Activated B cell treated with CpG ODN at 0.5 μM for 24 hours (primary cell): ENCODE measurements at regions of chr12 and their contacts with region 1.

Region 1: DNA sequence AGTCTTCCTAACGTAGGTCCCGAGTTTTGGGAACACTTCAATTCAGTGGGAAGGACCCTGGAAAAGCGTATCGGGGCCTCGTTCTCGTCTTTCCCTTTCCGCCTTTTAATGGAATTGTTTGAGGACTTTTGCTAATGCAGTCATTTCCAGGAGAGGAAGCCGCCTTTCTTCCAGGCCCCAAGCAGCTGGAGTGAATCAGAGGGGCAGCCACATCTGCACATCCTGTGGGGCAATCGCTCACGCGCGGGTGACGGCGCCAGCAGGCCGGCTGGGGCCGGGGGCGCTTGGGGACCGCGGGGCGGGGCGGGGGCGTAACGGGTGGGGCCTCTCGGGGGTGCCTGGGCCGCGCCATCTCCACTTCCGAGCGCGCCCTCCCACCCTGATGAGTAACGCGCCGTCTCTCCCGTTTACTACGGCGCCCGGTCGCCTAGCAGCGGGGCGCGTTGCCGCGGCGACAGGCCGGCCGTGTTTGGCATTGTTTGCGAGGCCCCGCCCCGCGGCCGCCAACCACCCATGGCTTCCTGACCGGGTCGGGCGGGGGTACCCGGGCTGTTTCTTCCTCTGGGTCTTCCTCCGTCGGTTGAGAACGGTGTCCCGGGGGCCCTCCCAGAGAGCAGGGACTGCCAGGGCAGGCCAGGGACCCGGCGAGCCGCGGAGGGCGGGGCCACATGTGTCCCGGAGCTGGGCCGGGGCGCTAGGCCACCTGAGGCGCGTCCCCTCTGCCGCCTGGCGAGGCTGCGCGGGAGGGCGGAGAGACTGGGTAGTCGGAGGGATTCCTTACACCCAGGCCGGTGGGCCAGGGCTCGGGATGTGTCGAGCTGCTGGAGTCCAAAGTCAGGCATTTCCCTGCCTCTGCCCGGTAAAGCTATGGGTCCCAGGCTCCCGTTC is 2.3 kb downstream of the GSG1 start:
- DNase-seq: peak; percentile 94
- ATAC-seq: peak; percentile 79
- H3K4me3 Mint-ChIP-seq: peak overlapping the region; percentile 83
- H3K27ac Mint-ChIP-seq: peak overlapping the region; percentile 96
- H3K4me1 Mint-ChIP-seq: peaks cover 63% of the 10 kb centered on the region
- H3K27me3 Mint-ChIP-seq: no peaks in the 10 kb centered on the region
- CTCF ChIP-seq: no peak

Region 2: GRCh38 chr12:12611512-12612306 is 489.4 kb before region 1 on chr12 and contains the start of gene CREBL2:
- CTCF ChIA-PET with region 1: no interaction called
- POLR2A ChIA-PET with region 1: no interaction called
- intact Hi-C with region 1: loop called (anchors 5 kb)
- DNase-seq: peak; percentile 75
- ATAC-seq: peak; percentile 91
- H3K4me3 Mint-ChIP-seq: peak within 1 kb of the TSS; percentile 94
- H3K27ac Mint-ChIP-seq: peak within 1 kb of the TSS; percentile 97
- H3K4me1 Mint-ChIP-seq: peaks cover 32% of the 10 kb centered on the region
- H3K27me3 Mint-ChIP-seq: no peaks in the 10 kb centered on the region
- CTCF ChIP-seq: no peak
- total RNA-seq, gene CREBL2: 10.1 and 10.8 TPM in 2 replicates

Region 3: GRCh38 chr12:12654691-12655460 is 446.2 kb before region 1 on chr12:
- CTCF ChIA-PET with region 1: no interaction called
- POLR2A ChIA-PET with region 1: no interaction called
- intact Hi-C with region 1: no loop called
- DNase-seq: no peak
- ATAC-seq: no peak
- H3K4me3 Mint-ChIP-seq: no peak overlapping the region
- H3K27ac Mint-ChIP-seq: no peak overlapping the region
- H3K4me1 Mint-ChIP-seq: peaks cover 7% of the 10 kb centered on the region
- H3K27me3 Mint-ChIP-seq: no peaks in the 10 kb centered on the region
- CTCF ChIP-seq: no peak

Region 4: DNA sequence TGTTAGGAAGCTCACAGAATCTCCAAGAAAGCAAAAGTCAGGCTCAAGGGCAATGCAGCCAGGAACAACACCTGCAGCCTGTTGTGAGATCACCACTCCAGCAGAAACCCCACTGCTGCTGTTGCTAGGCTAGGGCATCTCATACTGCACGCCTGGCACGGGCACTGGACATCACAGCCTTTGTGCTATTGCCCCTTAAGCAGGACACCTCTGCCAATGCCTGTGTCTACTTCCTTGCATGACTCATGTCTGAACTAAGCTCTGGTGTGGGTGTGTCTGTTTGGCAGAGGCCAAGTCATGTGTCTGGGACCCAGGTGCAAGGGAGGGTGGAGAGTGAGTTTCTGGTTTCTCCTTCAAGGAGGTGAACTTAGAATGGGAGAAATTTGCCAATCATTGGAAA is 297.9 kb before region 1 on chr12:
- CTCF ChIA-PET with region 1: no interaction called
- POLR2A ChIA-PET with region 1: no interaction called
- intact Hi-C with region 1: loop called (anchors 1 kb)
- DNase-seq: no peak
- ATAC-seq: peak; percentile 70
- H3K4me3 Mint-ChIP-seq: peak overlapping the region; percentile 12
- H3K27ac Mint-ChIP-seq: peak overlapping the region; percentile 6
- H3K4me1 Mint-ChIP-seq: peaks cover 65% of the 10 kb centered on the region
- H3K27me3 Mint-ChIP-seq: no peaks in the 10 kb centered on the region
- CTCF ChIP-seq: no peak

Region 5: DNA sequence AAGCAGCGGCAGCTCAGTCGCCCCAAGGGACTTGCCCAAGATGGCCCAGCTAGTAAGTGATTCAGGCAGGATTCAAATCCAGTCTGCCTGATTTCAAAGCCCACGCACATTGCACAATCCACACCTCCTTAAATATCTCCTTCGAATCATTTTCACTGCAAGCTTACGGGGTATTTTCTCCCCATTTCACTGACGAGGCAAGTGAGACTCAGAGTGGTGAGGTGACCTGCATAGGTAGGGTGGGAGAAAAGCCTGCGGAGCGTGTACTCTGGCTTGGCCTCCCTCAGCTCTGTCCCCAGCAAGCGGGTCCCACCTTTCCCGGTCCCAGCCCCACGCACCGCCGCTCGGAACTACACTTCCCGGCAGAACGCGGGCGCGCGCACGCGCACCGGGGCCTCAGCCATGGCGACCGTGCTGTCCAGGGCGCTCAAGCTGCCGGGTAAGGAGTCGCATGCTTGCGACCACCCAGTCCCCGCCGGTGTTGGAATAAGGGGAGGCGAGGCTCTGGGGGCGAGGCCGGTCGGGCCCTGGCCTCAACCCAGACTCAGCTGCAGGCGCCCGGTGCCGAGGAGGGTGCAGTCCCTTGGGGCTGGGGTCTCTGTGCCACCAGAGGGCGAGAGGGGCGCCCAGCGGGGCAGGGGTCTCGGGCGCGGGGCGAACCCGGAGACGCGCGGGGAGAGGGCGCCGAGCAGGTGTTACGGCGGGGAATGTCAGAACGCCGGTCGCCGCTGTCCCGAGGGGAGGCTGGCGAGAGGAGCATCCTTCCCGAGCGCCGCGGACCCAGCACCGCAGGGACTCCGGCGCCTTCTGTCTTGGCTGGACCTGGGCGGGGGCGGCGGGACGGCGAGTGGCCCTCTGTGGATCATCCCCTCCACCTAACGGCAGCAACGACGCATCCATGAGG is 56.9 kb before region 1 on chr12 and contains the start of gene FAM234B:
- CTCF ChIA-PET with region 1: no interaction called
- POLR2A ChIA-PET with region 1: interaction called, 13 read pairs
- intact Hi-C with region 1: loop called (anchors 1 kb)
- DNase-seq: peak; percentile 73
- ATAC-seq: peak; percentile 96
- H3K4me3 Mint-ChIP-seq: peak within 1 kb of the TSS; percentile 89
- H3K27ac Mint-ChIP-seq: peak within 1 kb of the TSS; percentile 80
- H3K4me1 Mint-ChIP-seq: peaks cover 18% of the 10 kb centered on the region
- H3K27me3 Mint-ChIP-seq: no peaks in the 10 kb centered on the region
- CTCF ChIP-seq: no peak
- total RNA-seq, gene FAM234B: 4.7 and 6.3 TPM in 2 replicates

Region 6: GRCh38 chr12:13173012-13173932 is 72.1 kb after region 1 on chr12:
- CTCF ChIA-PET with region 1: no interaction called
- POLR2A ChIA-PET with region 1: interaction called, 5 read pairs
- intact Hi-C with region 1: loop called (anchors 1 kb)
- DNase-seq: peak; percentile 20
- ATAC-seq: peak; percentile 96
- H3K4me3 Mint-ChIP-seq: peak overlapping the region; percentile 35
- H3K27ac Mint-ChIP-seq: peak overlapping the region; percentile 18
- H3K4me1 Mint-ChIP-seq: peaks cover 22% of the 10 kb centered on the region
- H3K27me3 Mint-ChIP-seq: peaks cover 22% of the 10 kb centered on the region
- CTCF ChIP-seq: no peak

Region 7: DNA sequence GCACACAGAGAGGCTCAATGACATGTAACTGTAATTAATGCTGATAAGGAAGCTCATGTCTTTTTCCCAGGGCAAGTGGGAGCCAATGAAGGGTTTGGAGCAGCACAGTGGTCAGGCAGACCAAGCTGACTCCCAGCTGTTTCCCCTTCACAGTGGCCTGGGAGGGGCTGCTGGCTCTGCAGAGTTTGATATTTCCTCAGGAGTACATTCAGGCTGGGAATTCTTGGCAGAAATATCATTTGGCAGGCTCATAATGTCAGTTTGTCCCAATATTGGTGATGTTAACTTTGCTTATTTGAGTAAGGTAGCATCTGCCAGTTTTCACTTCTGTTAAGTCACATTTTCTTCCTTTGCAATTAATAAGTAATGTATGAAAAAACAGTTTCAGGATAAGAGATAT is 342.4 kb after region 1 on chr12:
- CTCF ChIA-PET with region 1: no interaction called
- POLR2A ChIA-PET with region 1: no interaction called
- intact Hi-C with region 1: no loop called
- DNase-seq: no peak
- ATAC-seq: no peak
- H3K4me3 Mint-ChIP-seq: no peak overlapping the region
- H3K27ac Mint-ChIP-seq: no peak overlapping the region
- H3K4me1 Mint-ChIP-seq: no peaks in the 10 kb centered on the region
- H3K27me3 Mint-ChIP-seq: no peaks in the 10 kb centered on the region
- CTCF ChIP-seq: no peak

Region 8: DNA sequence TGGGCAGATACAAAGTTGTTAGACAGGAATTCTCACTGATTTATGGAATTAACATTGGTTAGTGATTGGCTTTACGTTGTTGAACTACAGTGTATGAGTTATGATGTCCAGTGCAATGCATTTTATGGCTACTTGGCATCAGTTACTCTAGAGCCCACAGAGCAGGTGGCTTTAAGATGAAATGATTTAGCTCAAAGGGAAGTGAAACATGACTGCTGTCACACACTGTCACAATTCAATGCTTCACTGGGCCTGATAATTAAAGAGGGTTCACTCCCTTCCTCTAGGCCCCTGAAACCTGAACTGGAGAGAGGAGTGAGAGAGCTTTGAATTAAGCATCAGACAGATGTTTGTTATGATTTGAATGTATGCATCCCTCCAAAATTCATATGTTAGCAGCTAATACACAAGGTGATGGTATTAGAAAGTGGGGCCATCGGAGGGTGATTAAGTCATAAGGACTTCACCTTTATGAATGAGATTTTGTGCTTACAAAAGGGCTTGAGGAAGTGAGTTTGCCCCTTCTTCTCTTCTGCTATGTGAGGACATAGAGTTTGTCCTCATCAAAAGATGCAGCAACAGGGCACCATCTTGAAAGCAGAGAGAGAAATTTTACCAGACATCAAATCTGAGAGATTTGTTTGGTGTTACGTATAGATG is 1056.1 kb after region 1 on chr12:
- CTCF ChIA-PET with region 1: no interaction called
- POLR2A ChIA-PET with region 1: no interaction called
- intact Hi-C with region 1: loop called (anchors 5 kb)
- DNase-seq: no peak
- ATAC-seq: peak; percentile 91
- H3K4me3 Mint-ChIP-seq: peak overlapping the region; percentile 62
- H3K27ac Mint-ChIP-seq: peak overlapping the region; percentile 97
- H3K4me1 Mint-ChIP-seq: peaks cover 71% of the 10 kb centered on the region
- H3K27me3 Mint-ChIP-seq: no peaks in the 10 kb centered on the region
- CTCF ChIP-seq: no peak